Heart left ventricle (tissue), 16 donors: ENCODE measurements at regions of chr9 and their contacts with region 1.

Region 1: GRCh38 chr9:108002371-108002956 is 512.9 kb upstream of the KLF4 start:
- DNase-seq: peak in 1 of 5 donors; percentile 36
- ATAC-seq: peak in 3 of 4 donors; percentile 26 to 62 (median 42)
- H3K4me3 ChIP-seq: no peak overlapping the region
- H3K27ac ChIP-seq: peak overlapping the region in 2 of 12 donors; percentile 32 to 44
- H3K4me1 ChIP-seq: peaks cover 0 to 13% (median 0%) of the 10 kb centered on the region in 12 donors
- H3K27me3 ChIP-seq: peaks cover 0 to 18% (median 0%) of the 10 kb centered on the region in 9 donors
- CTCF ChIP-seq: no peak
- POLR2A ChIP-seq: no peak

Region 2: DNA sequence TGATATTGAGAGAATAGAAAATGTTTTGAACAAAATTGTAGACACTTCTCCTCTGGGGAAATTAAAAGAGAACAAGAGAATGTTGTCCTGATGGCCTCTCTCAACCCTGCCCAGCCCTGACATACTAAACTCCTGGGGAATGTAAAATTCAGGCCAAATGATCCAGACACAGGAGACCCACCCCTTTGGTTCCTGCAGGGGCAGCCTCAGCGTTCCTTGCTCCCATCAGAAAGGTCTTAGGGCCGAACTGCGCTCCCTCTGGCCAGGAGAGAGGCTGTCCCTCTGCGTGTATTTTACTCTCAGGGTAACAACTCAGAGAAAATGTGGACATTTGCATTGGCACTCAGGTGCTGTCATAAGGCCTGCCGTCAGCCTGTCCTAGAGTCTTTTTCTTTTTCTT is 103.4 kb after region 1 on chr9:
- intact Hi-C with region 1: loop called in 1 of 10 experiments (anchors 10 kb)
- DNase-seq: no peak
- ATAC-seq: peak in 1 of 4 donors; percentile 64
- H3K4me3 ChIP-seq: no peak overlapping the region
- H3K27ac ChIP-seq: no peak overlapping the region
- H3K4me1 ChIP-seq: no peaks in the 10 kb centered on the region
- H3K27me3 ChIP-seq: no peaks in the 10 kb centered on the region
- CTCF ChIP-seq: no peak
- POLR2A ChIP-seq: no peak

Region 3: DNA sequence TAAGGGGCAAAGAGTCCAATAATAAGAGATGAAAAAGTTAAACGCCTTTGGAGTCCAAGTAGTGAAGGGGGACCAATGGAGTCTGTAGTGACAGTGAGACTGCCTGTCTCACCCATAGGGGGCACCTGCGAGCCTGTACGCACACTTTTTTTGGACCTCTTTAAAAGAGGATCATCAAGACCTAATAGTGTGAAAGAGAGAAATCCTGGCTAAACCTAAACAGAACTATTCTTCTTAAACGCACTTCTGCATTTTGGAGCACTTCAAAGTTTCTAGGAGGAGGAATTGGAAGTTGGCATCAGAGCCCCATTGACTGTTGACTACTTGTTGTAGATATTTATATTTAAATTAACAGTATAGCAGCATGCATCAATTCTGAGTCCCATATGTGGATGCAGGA is 123.2 kb after region 1 on chr9:
- intact Hi-C with region 1: no loop called
- DNase-seq: no peak
- ATAC-seq: no peak
- H3K4me3 ChIP-seq: no peak overlapping the region
- H3K27ac ChIP-seq: no peak overlapping the region
- H3K4me1 ChIP-seq: no peaks in the 10 kb centered on the region
- H3K27me3 ChIP-seq: no peaks in the 10 kb centered on the region
- CTCF ChIP-seq: peak in 6 of 12 donors; percentile 10 to 22 (median 20)
- POLR2A ChIP-seq: no peak